ENCODE measurements at regions of chr4 and their contacts with region 1.

Region 1: GRCh38 chr4:155353923-155354540 is 22.7 kb downstream of the MAP9 start:
- DNase-seq: peak; percentile 54
- H3K4me3 ChIP-seq: no peak overlapping the region
- H3K27ac ChIP-seq: no peak overlapping the region
- H3K4me1 ChIP-seq: no peaks in the 10 kb centered on the region
- CTCF ChIP-seq: peak; percentile 83

Region 2: DNA sequence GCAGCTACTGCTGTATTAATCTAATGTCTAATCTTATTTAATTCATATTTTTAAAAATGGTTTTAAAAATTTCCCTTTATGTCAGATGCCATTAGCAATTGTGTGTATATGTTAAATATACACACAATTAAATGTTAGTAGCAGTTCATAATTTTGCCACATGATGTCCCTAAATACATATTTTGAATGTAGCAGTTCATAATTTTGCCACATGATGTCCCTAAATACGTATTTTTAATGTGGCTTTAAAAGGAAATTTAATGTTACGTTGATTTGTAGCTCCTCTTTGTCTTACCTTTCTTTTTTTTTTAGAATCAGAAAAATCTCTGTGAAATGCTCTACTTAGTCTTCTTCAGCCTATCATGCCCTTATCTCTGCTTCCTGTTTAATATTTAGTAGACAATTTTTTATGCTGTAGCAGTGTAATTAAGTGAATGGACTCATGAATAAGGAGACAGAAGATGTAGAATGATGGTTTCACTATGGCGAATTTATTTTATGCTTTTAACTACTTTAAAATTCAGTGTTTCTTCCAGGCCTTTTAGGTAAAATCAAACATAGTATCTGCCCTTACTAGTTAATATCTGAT is 546.9 kb before region 1 on chr4:
- CTCF ChIA-PET with region 1: no interaction called
- POLR2A ChIA-PET with region 1: no interaction called
- intact Hi-C with region 1: loop called (anchors 5 kb)
- DNase-seq: peak; percentile 49
- H3K4me3 ChIP-seq: no peak overlapping the region
- H3K27ac ChIP-seq: no peak overlapping the region
- H3K4me1 ChIP-seq: no peaks in the 10 kb centered on the region
- CTCF ChIP-seq: peak; percentile 95

Region 3: GRCh38 chr4:154982187-154983047 is 371.6 kb before region 1 on chr4:
- CTCF ChIA-PET with region 1: no interaction called
- POLR2A ChIA-PET with region 1: no interaction called
- intact Hi-C with region 1: loop called (anchors 5 kb)
- DNase-seq: peak; percentile 37
- H3K4me3 ChIP-seq: no peak overlapping the region
- H3K27ac ChIP-seq: no peak overlapping the region
- H3K4me1 ChIP-seq: no peaks in the 10 kb centered on the region
- CTCF ChIP-seq: peak; percentile 78

Measured in OCI-LY7 (cell line).